ENCODE measurements at regions of chr4 and their contacts with region 1.

Region 1: GRCh38 chr4:99459546-99460042 is 24.5 kb upstream of the ADH7 start:
- DNase-seq: no peak

Region 2: DNA sequence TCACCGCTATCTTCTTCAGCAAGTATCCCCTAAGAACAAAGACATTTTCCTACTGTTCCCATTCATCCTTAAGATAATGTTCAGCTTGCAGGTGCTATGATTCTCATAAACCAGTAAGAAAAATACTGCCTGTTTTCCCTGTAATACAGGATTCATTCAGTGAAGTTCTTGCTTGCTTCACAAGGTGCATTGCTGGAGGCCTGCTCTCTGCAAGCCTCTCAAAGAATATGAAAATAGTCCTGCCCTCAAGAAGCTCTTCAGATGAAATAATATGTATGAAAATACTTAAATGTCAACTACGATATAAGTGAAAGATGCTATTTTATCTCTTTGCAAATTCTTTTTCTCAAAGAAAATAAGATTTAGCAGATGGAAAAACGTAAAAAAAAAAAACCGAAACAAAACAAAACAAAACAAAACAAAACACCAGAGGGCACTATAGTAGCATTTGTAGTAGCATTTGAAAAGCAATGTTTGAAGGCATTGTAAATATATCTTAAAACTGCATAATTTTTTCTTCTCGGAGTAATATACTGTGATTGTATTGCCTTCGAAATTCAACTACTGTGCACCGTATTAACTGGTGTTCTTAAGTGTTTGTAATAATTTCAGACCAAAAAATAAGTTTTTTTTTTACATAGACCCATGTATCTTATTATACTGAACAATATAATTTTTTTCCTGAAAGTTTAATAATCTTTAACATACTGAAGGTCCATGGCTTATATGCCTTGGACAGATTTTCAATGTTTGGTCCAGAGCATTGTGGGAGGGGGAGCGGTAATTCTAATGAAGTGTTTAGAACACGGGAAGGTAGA is 341.5 kb before region 1 on chr4:
- intact Hi-C with region 1: loop called (anchors 2 kb)
- DNase-seq: no peak

Region 3: DNA sequence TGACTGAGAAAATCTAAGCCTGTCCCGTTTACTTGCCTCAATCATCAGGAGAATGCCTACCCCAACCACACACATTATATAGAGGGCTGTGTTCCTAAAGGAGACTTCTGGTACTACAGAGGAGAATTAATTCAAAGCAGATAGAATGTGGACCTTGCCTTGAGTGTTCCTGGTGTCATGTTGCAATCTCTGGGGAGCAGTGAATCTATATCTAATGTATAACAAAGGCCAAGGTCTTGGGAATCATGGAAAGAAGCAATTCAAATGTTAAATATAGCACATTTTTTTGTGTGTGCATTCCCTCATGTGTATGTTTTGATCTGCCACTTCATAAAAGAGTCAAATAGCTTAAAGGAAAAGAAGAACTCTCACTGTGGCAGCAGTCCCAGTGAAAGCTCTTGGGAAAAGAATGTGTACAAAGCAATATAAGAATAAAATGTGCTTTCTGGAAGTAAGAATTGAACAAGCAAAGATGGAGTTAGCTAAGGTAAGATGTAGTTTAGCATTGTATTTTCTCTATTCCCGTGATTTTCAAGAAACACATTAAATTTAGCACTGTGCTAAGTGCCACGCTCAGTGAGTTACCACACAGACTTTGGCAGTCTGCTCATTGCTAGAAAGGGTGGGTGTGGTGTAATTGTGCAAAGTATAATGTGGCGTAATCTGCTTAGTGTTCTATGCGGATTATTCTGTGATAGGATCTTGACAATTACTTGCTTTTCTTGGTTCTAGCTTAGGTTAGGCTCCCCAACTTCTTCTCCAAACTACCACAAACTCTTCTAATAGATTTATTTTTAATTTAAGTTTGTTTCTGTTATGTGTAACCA is 254.2 kb before region 1 on chr4:
- intact Hi-C with region 1: no loop called
- DNase-seq: no peak